ENCODE measurements at regions of chr9 and their contacts with region 1.

Region 1: GRCh38 chr9:33816327-33817252 is at the start of gene UBE2R2:
- DNase-seq: peak; percentile 89 to 99 (median 92)
- ATAC-seq: peak; percentile 80
- H3K4me3 ChIP-seq: peak within 1 kb of the TSS; percentile 64
- H3K4me3 Mint-ChIP-seq: peak within 1 kb of the TSS; percentile 96
- H3K27ac ChIP-seq: peak within 1 kb of the TSS; percentile 96
- H3K27ac Mint-ChIP-seq: peak within 1 kb of the TSS; percentile 98
- H3K4me1 ChIP-seq: peaks cover 34% of the 10 kb centered on the region
- H3K4me1 Mint-ChIP-seq: peaks cover 59% of the 10 kb centered on the region
- H3K27me3 ChIP-seq: no peaks in the 10 kb centered on the region
- H3K27me3 Mint-ChIP-seq: no peaks in the 10 kb centered on the region
- CTCF ChIP-seq: no peak
- total RNA-seq, gene UBE2R2: 22.7 to 24.5 TPM

Region 2: DNA sequence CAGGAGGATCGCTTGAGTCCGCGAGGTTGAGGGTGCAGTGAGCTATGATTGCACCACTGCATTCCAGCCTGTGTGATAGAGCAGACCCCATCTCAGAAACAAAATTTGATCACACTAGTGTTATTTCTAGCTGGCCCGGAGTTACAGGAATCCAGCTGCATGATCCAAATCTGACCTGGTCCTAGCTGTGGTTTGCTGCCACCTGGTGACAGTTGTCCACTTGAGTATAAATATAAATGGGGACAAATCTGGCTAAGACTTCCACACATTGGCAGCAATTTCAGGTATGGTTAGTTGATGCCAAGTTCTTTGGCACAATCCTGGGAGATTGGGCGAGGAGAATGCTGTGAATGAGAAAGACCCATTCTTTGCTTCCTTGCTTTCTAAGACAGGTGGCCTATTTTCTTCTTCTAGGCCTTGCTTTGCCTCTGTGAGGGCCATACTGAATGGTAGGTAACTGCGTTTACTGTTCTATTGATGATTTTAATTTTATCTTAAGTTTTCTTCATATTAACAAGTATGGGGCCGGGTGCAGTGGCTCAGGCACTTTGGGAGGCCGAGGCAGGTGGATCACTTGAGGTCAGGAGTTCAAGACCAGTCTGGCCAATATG is 35.7 kb after region 1 on chr9:
- CTCF ChIA-PET with region 1: interaction called, 51 read pairs
- POLR2A ChIA-PET with region 1: interaction called, 11 read pairs
- intact Hi-C with region 1: loop called (anchors 1 kb)
- DNase-seq: peak; percentile 37 to 80 (median 54)
- ATAC-seq: peak; percentile 72
- H3K4me3 ChIP-seq: no peak overlapping the region
- H3K4me3 Mint-ChIP-seq: no peak overlapping the region
- H3K27ac ChIP-seq: no peak overlapping the region
- H3K27ac Mint-ChIP-seq: no peak overlapping the region
- H3K4me1 ChIP-seq: peaks cover 18% of the 10 kb centered on the region
- H3K4me1 Mint-ChIP-seq: peaks cover 59% of the 10 kb centered on the region
- H3K27me3 ChIP-seq: no peaks in the 10 kb centered on the region
- H3K27me3 Mint-ChIP-seq: no peaks in the 10 kb centered on the region
- CTCF ChIP-seq: peak; percentile 71

Region 3: DNA sequence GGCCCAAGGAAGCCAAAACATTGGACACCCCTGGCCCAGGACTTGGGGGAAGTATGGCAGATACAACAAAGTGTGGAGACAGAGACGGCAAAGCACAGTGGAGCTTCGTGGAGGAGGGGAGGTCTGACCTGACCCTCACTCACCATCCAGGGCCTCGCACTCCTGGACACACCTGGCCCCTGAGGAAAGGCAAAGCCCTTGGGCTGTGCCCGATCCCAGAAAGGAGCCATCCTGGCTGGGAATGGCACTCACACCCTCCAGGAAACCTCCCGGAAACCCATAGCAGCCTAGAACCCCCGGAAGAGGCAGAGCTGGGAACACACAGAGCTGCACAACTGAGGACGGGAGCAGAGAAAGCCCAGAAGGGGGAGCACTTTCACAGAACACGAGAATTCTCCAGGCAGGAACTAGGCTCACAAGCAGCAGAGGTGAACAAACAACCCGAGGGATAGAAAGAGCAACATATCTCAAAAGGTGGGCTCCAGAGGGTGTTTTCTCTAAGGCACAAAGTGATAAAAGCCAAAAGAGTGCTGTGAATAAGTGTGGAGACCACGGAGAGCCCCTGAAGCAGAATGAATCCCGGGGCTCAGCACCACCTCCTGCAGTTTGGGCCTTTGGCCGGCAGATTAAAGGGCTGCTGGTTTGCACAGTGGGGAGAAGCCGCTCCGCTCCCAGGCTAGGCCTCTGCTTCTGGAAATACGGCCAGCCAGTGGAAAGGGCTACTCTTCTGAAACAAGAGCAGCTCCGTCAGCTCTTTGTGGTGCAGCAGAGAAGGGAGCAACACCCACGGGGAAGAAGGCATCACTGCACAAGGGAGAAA is 108.6 kb after region 1 on chr9:
- CTCF ChIA-PET with region 1: interaction called, 4 read pairs
- POLR2A ChIA-PET with region 1: no interaction called
- intact Hi-C with region 1: loop called (anchors 1 to 5 kb)
- DNase-seq: peak in 5 of 14 experiments; percentile 5 to 42 (median 25)
- ATAC-seq: no peak
- H3K4me3 ChIP-seq: no peak overlapping the region
- H3K4me3 Mint-ChIP-seq: no peak overlapping the region
- H3K27ac ChIP-seq: no peak overlapping the region
- H3K27ac Mint-ChIP-seq: no peak overlapping the region
- H3K4me1 ChIP-seq: no peaks in the 10 kb centered on the region
- H3K4me1 Mint-ChIP-seq: no peaks in the 10 kb centered on the region
- H3K27me3 ChIP-seq: no peaks in the 10 kb centered on the region
- H3K27me3 Mint-ChIP-seq: no peaks in the 10 kb centered on the region
- CTCF ChIP-seq: peak; percentile 38

Region 4: DNA sequence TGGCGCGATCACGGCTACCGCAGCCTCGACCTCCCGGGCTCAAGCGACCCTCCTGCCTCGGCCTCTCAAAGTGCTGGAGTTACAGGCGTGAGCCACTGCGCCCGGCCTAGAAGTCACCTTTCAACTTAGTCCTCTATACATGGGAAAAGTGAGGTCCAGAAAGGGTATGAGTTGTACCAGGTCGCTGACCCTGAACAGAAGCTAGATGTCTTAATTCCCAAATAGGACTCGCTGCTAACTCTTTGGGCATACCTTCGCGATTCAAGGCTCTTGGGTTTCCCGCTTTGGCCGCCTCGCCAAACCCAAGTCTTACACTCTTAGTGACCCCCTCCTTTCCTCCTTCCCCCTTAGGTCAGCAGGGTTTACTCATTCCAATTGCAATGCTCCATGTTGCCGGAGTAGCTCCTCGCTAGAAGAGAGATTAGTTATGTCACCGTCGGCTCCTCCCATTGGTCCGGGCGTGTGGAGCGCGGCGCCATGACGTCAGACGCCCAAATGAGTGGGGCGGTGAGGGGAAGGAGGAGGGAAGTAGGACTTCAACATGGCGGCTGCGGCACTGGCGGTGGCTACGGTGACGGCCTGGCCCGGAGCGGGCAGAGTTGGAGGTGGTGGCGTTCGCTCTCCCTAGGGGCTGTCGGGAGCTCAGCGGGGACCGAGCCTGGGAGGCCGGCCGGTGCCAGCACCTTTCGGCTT is 362.1 kb after region 1 on chr9 and contains the start of gene UBAP1:
- CTCF ChIA-PET with region 1: no interaction called
- POLR2A ChIA-PET with region 1: no interaction called
- intact Hi-C with region 1: loop called in 1 of 2 experiments (anchors 5 kb)
- DNase-seq: peak; percentile 88 to 98 (median 94)
- ATAC-seq: peak; percentile 97
- H3K4me3 ChIP-seq: peak within 1 kb of the TSS; percentile 71
- H3K4me3 Mint-ChIP-seq: peak within 1 kb of the TSS; percentile 94
- H3K27ac ChIP-seq: peak within 1 kb of the TSS; percentile 87 to 90
- H3K27ac Mint-ChIP-seq: peak within 1 kb of the TSS; percentile 90
- H3K4me1 ChIP-seq: peaks cover 32% of the 10 kb centered on the region
- H3K4me1 Mint-ChIP-seq: peaks cover 15% of the 10 kb centered on the region
- H3K27me3 ChIP-seq: no peaks in the 10 kb centered on the region
- H3K27me3 Mint-ChIP-seq: no peaks in the 10 kb centered on the region
- CTCF ChIP-seq: no peak
- total RNA-seq, gene UBAP1: 47.1 to 50.4 TPM

Measured in CD4-positive, alpha-beta T cell (primary cell).